ENCODE measurements at regions of chr9 and their contacts with region 1.

Region 1: DNA sequence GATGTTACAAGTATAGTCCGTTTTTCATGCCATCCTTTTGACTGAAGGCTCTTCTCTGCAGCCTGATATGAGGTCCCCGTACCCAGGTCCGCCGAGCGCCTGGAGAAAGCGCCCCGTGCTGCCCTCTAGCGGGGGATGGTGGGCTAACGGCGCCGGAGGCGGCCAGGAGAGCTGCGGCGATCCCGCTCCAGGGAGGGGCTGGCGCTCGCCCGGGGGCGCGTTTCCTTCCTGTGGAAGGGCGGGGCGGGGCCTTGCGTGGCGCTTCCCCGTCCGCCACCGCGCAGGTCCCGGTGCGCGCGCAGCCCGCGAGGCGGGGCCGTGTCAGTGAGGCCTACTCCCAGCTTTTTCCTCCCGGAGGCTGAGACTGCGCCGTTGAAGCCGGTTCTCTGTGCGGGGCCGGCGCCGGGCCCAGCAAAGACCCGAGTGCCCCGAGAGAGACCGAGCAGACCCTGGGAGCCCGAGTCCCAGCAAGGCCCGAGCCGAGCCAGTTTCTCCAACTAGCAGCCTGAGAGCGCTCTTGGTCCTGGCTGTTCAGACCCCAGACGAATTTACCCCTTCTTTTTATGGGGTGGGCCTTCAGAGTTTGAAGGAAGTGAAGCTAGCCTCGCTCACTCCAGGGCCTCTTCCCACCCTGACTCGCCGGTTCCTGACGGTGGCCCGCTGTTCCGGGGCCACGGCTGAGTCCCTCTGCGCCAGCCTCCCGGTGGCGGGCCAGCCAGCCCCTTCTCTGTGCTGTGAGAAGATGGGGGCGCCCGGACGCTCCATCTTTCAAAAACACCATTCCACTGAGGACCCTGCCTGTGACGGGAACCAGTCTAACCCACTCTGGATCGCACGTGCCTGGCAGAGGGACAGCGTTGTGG is 9.7 kb upstream of the PHF2 start:
- H3K4me3 ChIP-seq: peak overlapping the region; percentile 58
- H3K27ac ChIP-seq: peak overlapping the region; percentile 84
- H3K4me1 ChIP-seq: no peaks in the 10 kb centered on the region
- CTCF ChIP-seq: peak; percentile 73; the same call in 1 of the 2 replicates

Region 2: GRCh38 chr9:93154315-93154903 is 412.2 kb before region 1 on chr9:
- CTCF ChIA-PET with region 1: interaction called, 10 read pairs
- POLR2A ChIA-PET with region 1: no interaction called
- H3K4me3 ChIP-seq: no peak overlapping the region
- H3K27ac ChIP-seq: no peak overlapping the region
- H3K4me1 ChIP-seq: no peaks in the 10 kb centered on the region
- CTCF ChIP-seq: peak; percentile 36; the same call in 1 of the 2 replicates

Region 3: GRCh38 chr9:93453047-93453914 is 113.4 kb before region 1 on chr9 and contains the start of gene FAM120AOS:
- CTCF ChIA-PET with region 1: interaction called, 13 read pairs
- POLR2A ChIA-PET with region 1: interaction called, 14 read pairs
- H3K4me3 ChIP-seq: peak within 1 kb of the TSS; percentile 93
- H3K27ac ChIP-seq: peak within 1 kb of the TSS; percentile 92
- H3K4me1 ChIP-seq: peaks cover 5% of the 10 kb centered on the region; the same call in 1 of the 2 replicates
- CTCF ChIP-seq: no peak

Region 4: DNA sequence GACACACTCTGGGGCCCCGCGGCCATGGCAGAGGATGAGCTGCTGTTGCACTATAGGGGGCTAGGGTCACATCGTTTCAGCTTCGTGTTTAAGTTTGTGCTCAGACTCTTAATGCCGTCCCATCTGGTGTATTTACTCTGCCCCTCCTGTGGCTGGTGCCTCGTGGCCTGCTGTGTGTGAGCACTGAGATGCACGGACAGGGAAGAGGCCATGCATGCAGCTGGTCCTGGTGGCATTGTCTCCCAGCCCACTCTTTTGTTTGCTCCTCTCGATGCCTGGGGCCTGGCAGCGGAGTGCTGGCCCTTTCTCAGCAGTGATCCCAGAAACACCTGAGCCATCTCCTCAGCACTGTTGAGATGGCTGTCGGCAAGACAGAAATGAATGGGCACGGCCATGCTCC is 20.3 kb before region 1 on chr9:
- CTCF ChIA-PET with region 1: interaction called, 50 read pairs
- POLR2A ChIA-PET with region 1: interaction called, 4 read pairs
- H3K4me3 ChIP-seq: no peak overlapping the region
- H3K27ac ChIP-seq: no peak overlapping the region
- H3K4me1 ChIP-seq: no peaks in the 10 kb centered on the region
- CTCF ChIP-seq: no peak

Region 5: DNA sequence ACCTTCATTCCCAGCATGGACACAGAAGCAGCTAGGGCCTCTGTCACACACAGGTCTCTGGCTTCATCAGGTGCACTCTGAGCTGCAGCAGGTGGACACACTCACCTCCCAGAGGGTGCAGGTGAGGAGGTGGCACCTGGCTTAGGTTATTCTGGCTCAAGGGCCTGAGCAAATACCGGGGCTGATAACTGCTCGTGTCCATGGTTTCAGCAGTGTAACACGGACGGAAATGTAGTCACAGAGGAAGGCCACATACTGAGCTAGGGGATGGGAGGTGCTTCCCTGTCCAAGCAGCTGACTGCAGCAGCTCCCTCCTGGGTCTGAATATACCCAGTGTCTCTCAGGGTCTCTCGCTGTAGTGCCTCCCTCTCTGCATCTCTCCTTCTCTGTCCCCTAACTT is 15.5 kb after region 1 on chr9:
- CTCF ChIA-PET with region 1: interaction called, 12 read pairs
- POLR2A ChIA-PET with region 1: interaction called, 6 read pairs
- H3K4me3 ChIP-seq: no peak overlapping the region
- H3K27ac ChIP-seq: no peak overlapping the region
- H3K4me1 ChIP-seq: no peaks in the 10 kb centered on the region; the same call in 1 of the 2 replicates
- CTCF ChIP-seq: no peak

Region 6: GRCh38 chr9:93594041-93594667 is 27.5 kb after region 1 on chr9:
- CTCF ChIA-PET with region 1: interaction called, 5 read pairs
- POLR2A ChIA-PET with region 1: interaction called, 10 read pairs
- H3K4me3 ChIP-seq: no peak overlapping the region
- H3K27ac ChIP-seq: no peak overlapping the region
- H3K4me1 ChIP-seq: 0 out of 2 replicates have a peak, but pooled peaks cover 3% of the 10 kb centered on the region
- CTCF ChIP-seq: no peak

Measured in HEK293 (cell line).